Activated CD4-positive, alpha-beta memory T cell treated with anti-CD3 and anti-CD28 coated beads, Interleukin-2, amount 10 ng/mL, durations not matched to agents 7 days and 5 days (primary cell): ENCODE measurements at regions of chr17 and their contacts with region 1.

Region 1: DNA sequence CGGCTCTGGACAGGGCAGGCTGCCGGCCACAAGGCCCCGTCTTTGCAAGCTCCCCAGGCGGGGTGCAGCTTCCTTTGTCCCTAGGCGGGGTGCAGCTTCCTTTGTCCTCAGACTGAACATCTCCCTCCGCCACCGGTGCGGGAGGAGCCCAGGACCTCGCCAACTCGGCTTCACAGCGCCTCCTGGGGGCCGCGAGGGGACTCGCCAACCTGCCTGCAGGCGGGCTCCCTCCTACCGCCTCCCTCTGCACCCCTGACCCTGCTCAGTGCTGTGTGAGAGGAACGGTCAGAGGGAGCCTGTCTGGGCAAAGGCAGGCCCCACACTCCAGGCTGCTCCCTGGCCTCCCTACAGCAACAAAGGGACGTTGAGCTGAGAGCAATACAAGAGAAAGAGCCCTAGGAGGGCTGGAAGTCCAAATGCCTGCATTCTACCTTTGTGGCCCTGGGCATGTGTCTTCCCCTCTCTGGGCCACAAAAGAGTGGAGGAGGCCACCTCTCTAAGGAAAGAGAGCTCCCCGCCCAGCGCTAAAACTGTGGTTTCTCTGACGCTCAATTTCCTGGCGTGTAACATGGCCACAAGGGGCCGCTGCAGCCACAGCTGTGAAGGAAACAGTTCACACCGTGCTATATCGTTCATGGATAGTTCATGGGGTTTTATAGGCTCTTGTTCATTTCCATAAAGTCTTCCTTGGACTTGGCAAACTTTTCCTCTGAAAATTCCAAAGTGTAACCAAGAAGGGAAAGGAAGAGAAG is 20.9 kb upstream of the KRT19 start:
- DNase-seq: peak; percentile 89
- H3K4me3 Mint-ChIP-seq: no peak overlapping the region
- H3K27ac Mint-ChIP-seq: peak overlapping the region; percentile 75
- H3K4me1 Mint-ChIP-seq: peaks cover 21% of the 10 kb centered on the region
- H3K27me3 Mint-ChIP-seq: peaks cover 8% of the 10 kb centered on the region

Region 2: GRCh38 chr17:40857535-40857934 is 691.5 kb before region 1 on chr17:
- CTCF ChIA-PET with region 1: interaction called, 14 read pairs
- POLR2A ChIA-PET with region 1: interaction called, 3 read pairs
- DNase-seq: no peak
- H3K4me3 Mint-ChIP-seq: no peak overlapping the region
- H3K27ac Mint-ChIP-seq: no peak overlapping the region
- H3K4me1 Mint-ChIP-seq: peaks cover 2% of the 10 kb centered on the region
- H3K27me3 Mint-ChIP-seq: peaks cover 16% of the 10 kb centered on the region

Region 3: GRCh38 chr17:41494524-41494923 is 54.5 kb before region 1 on chr17:
- CTCF ChIA-PET with region 1: interaction called, 10 read pairs
- POLR2A ChIA-PET with region 1: interaction called, 3 read pairs
- DNase-seq: no peak
- H3K4me3 Mint-ChIP-seq: no peak overlapping the region
- H3K27ac Mint-ChIP-seq: no peak overlapping the region
- H3K4me1 Mint-ChIP-seq: peaks cover 17% of the 10 kb centered on the region
- H3K27me3 Mint-ChIP-seq: peaks cover 2% of the 10 kb centered on the region

Region 4: GRCh38 chr17:41559548-41559947 is 10.5 kb after region 1 on chr17:
- CTCF ChIA-PET with region 1: interaction called, 35 read pairs
- POLR2A ChIA-PET with region 1: no interaction called
- DNase-seq: no peak
- H3K4me3 Mint-ChIP-seq: no peak overlapping the region
- H3K27ac Mint-ChIP-seq: no peak overlapping the region
- H3K4me1 Mint-ChIP-seq: no peaks in the 10 kb centered on the region
- H3K27me3 Mint-ChIP-seq: peaks cover 59% of the 10 kb centered on the region

Region 5: DNA sequence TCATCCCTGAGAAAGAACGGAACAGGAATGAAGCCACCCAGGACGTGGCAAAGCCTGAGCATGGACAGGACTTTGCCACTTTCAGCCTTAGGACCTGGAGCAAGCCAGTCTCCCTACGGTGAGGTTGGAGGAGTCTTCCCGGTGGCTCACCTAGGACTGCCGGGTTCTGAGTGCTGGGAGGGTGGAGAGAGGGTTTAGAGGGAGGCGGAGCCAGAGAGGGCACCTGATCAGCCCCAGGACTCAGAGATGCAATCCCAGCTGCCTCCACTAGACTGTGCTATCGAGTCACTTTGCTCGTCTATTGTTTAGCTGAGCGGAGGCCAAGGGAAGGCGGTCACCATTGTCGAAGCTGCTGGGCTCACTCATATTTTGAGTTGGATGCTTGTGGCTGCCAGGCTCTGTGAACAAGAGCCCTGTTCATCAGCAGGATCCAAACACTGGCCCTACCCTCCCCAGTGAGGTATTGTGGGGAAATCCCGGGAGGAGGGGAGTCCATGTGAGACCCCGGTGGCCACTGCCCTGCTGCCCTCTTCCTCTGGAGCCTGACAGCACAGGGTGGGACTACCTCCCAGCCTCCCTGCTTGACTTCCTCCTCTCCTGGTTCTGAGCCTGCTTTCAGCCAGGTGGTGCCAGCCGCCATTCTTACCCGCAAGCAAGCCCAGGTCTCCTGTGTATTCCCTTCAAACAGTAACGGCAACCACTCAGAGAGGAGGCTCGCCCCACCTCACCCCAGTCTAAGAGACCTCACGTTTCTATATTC is 30.6 kb after region 1 on chr17:
- CTCF ChIA-PET with region 1: interaction called, 18 read pairs
- POLR2A ChIA-PET with region 1: no interaction called
- DNase-seq: peak; percentile 82
- H3K4me3 Mint-ChIP-seq: no peak overlapping the region
- H3K27ac Mint-ChIP-seq: no peak overlapping the region
- H3K4me1 Mint-ChIP-seq: no peaks in the 10 kb centered on the region
- H3K27me3 Mint-ChIP-seq: peaks cover 26% of the 10 kb centered on the region

Region 6: DNA sequence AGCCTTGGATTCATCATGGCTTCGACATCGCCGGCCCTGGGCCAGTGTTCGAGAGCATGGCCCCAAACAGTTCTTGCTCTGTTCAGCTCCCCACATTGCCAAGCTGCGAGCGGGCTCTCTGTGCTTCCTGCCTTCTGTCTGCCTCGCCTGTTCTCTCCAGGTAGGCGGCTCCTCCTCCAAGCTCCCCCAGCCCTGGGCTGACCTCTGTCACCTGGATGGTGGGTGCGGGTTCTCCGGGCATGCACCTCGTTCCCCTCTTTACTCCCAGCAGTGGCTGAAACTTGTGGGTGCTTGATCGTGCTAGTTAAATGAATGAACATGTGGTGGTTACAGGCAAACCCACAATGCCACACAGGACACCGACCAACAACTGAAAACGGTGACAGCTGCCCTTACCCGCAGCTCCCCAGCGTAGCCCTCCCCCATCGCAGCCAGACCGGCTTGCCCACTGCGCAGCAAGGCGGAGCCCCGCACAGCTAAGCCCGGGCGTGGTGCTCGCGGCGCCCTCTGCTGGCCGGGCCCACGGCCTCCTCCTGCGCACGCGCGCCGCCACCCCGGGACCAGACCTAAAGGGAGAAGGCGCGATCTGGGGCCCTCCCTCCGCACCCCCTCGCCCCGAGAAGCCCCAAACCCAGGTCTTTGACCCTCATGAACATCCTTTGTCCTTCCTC is 116.7 kb after region 1 on chr17:
- CTCF ChIA-PET with region 1: interaction called, 184 read pairs
- POLR2A ChIA-PET with region 1: interaction called, 4 read pairs
- DNase-seq: peak; percentile 91
- H3K4me3 Mint-ChIP-seq: peak overlapping the region; percentile 75
- H3K27ac Mint-ChIP-seq: peak overlapping the region; percentile 94
- H3K4me1 Mint-ChIP-seq: peaks cover 47% of the 10 kb centered on the region
- H3K27me3 Mint-ChIP-seq: peaks cover 14% of the 10 kb centered on the region

Region 7: DNA sequence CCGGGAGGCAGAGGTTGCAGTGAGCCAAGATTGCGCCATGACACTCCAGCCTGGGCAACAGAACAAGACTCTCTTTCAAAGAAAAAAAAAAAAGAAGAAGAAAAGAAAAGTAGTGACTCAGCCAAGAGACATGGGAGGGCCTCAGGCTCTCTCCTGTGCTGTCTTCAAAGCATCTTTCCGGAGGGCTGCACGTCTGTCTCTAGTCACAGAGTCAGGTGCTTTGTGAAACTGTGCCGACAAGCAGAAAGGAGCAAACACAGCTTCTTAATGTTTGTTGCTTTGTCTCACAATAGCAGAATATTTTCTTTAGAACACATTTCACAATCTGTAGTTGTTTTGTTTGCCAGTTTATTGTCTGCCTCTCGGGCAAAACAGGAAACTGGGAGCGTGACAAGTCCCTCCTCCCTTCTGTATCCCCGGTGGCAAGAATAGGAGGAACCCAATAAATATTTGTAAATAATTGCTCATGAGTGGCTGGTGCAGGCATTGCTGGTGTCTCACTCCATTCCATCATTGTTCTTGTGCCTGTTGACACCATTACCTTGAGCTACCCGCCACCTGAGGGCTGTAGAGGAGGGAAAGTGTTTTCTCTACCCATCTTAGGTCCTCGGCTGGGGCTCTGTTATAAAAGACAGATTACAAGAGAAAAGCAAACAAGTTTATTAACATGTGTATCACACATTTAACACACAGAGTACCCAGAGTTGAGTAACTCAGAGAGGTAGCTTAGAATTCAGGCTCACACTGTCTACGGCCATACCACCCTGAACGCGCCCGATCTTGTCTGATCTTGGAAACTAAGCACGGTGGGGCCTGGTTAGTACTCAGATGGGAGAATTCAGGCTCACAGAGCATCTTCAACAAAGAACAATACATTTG is 168.6 kb after region 1 on chr17:
- CTCF ChIA-PET with region 1: no interaction called
- POLR2A ChIA-PET with region 1: no interaction called
- DNase-seq: peak; percentile 25
- H3K4me3 Mint-ChIP-seq: no peak overlapping the region
- H3K27ac Mint-ChIP-seq: no peak overlapping the region
- H3K4me1 Mint-ChIP-seq: peaks cover 13% of the 10 kb centered on the region
- H3K27me3 Mint-ChIP-seq: peaks cover 4% of the 10 kb centered on the region

Region 8: DNA sequence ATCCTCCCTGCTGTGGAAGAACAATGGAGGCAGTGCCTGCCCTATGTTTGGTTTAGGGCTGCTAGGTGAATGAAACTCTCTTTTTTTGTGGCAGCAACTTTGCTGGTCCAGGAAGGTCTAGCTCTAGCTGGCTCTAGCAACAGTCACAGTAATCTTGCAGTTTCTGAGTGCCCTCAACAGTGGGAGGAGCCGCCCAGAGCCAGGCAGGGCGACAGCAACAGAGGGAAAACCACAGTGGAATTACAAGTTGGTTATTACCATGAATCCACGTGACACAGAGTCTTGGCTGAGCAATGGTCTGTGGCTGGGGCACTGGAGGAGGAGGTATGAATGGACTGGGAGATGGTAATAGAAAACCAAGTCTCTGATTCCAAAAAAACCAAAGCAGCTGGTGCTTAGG is 583.9 kb after region 1 on chr17:
- CTCF ChIA-PET with region 1: no interaction called
- POLR2A ChIA-PET with region 1: no interaction called
- DNase-seq: peak; percentile 39
- H3K4me3 Mint-ChIP-seq: no peak overlapping the region
- H3K27ac Mint-ChIP-seq: peak overlapping the region; percentile 69
- H3K4me1 Mint-ChIP-seq: peaks cover 58% of the 10 kb centered on the region
- H3K27me3 Mint-ChIP-seq: no peaks in the 10 kb centered on the region